CD4-positive, alpha-beta memory T cell (primary cell): ENCODE measurements at regions of chr1 and their contacts with region 1.

Region 1: GRCh38 chr1:159009704-159010361 is at the start of gene IFI16:
- DNase-seq: peak; percentile 70 to 85 (median 77)
- H3K4me3 ChIP-seq: peak within 1 kb of the TSS; percentile 54 to 97
- H3K4me3 Mint-ChIP-seq: peak within 1 kb of the TSS; percentile 89 to 99 (median 97)
- H3K27ac ChIP-seq: peak within 1 kb of the TSS; percentile 88
- H3K27ac Mint-ChIP-seq: peak within 1 kb of the TSS; percentile 87 to 95 (median 93)
- H3K4me1 ChIP-seq: peaks cover 36% of the 10 kb centered on the region
- H3K4me1 Mint-ChIP-seq: peaks cover 40 to 71% (median 46%) of the 10 kb centered on the region in 4 donors
- H3K27me3 ChIP-seq: no peaks in the 10 kb centered on the region
- H3K27me3 Mint-ChIP-seq: no peaks in the 10 kb centered on the region
- total RNA-seq, gene IFI16: 160 to 162 TPM

Region 2: DNA sequence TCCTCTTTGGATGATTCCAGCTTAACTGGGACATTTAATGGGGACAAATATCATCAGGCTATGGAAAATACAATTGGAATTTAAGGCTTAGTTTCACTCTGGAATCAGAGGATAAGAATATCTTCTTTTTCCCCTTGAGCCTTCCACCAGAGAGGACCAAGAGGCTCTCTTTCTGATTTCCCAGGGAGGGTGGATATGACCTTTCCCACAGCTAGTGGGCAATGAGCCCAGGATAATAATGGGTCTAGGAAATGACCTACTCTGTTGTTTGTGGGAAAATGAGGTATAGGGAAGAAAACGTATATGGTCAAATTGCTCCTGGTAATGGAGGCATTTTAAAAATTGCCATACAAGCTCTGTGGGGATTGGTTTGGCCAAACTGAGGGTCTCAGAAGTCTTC is 457.5 kb before region 1 on chr1:
- CTCF ChIA-PET with region 1: no interaction called
- POLR2A ChIA-PET with region 1: no interaction called
- intact Hi-C with region 1: no loop called
- DNase-seq: no peak
- H3K4me3 ChIP-seq: no peak overlapping the region
- H3K4me3 Mint-ChIP-seq: no peak overlapping the region
- H3K27ac ChIP-seq: no peak overlapping the region
- H3K27ac Mint-ChIP-seq: no peak overlapping the region
- H3K4me1 ChIP-seq: no peaks in the 10 kb centered on the region
- H3K4me1 Mint-ChIP-seq: no peaks in the 10 kb centered on the region
- H3K27me3 ChIP-seq: peaks cover 3% of the 10 kb centered on the region
- H3K27me3 Mint-ChIP-seq: peaks cover 10 to 17% of the 10 kb centered on the region in 2 donors

Region 3: DNA sequence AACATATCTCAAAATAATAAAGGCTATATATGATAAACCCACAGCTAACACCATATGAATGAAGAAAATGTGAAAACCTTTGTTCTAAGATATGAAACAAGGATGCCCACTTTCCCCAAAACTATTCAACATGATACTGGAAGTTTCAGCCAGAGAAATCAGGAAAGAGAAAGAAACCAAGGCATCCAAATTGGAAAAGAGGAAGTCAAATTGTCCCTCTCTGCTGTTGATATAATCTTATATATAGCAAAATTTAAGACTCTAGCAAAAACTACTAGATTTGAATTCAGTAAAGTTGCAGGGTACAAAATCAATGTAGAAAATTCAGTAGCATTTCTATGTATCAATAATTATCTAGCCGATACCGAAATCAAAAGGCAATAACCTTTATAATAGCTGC is 409.1 kb before region 1 on chr1:
- CTCF ChIA-PET with region 1: no interaction called
- POLR2A ChIA-PET with region 1: no interaction called
- intact Hi-C with region 1: no loop called
- DNase-seq: no peak
- H3K4me3 ChIP-seq: no peak overlapping the region
- H3K4me3 Mint-ChIP-seq: no peak overlapping the region
- H3K27ac ChIP-seq: no peak overlapping the region
- H3K27ac Mint-ChIP-seq: no peak overlapping the region
- H3K4me1 ChIP-seq: no peaks in the 10 kb centered on the region
- H3K4me1 Mint-ChIP-seq: no peaks in the 10 kb centered on the region
- H3K27me3 ChIP-seq: no peaks in the 10 kb centered on the region
- H3K27me3 Mint-ChIP-seq: peaks cover 1 to 5% of the 10 kb centered on the region in 2 donors

Region 4: GRCh38 chr1:158931055-158931737 is 78.6 kb before region 1 on chr1 and contains the start of gene PYHIN1:
- CTCF ChIA-PET with region 1: no interaction called
- POLR2A ChIA-PET with region 1: interaction called, 29 read pairs
- intact Hi-C with region 1: loop called (anchors 2 kb)
- DNase-seq: peak; percentile 52 to 67 (median 57)
- H3K4me3 ChIP-seq: peak within 1 kb of the TSS; percentile 50 to 67
- H3K4me3 Mint-ChIP-seq: peak within 1 kb of the TSS; percentile 97 to 100 (median 99)
- H3K27ac ChIP-seq: peak within 1 kb of the TSS; percentile 62
- H3K27ac Mint-ChIP-seq: peak within 1 kb of the TSS; percentile 83 to 98 (median 96)
- H3K4me1 ChIP-seq: peaks cover 40% of the 10 kb centered on the region
- H3K4me1 Mint-ChIP-seq: peaks cover 31 to 52% (median 37%) of the 10 kb centered on the region in 4 donors
- H3K27me3 ChIP-seq: no peaks in the 10 kb centered on the region
- H3K27me3 Mint-ChIP-seq: no peaks in the 10 kb centered on the region
- total RNA-seq, gene PYHIN1: 83.6 to 93.8 TPM

Region 5: GRCh38 chr1:159056069-159056698 is 46.4 kb after region 1 on chr1:
- CTCF ChIA-PET with region 1: interaction called, 5 read pairs
- POLR2A ChIA-PET with region 1: interaction called, 4 read pairs
- intact Hi-C with region 1: loop called (anchors 5 kb)
- DNase-seq: no peak
- H3K4me3 ChIP-seq: no peak overlapping the region
- H3K4me3 Mint-ChIP-seq: no peak overlapping the region
- H3K27ac ChIP-seq: no peak overlapping the region
- H3K27ac Mint-ChIP-seq: peak overlapping the region in 6 of 7 donors; percentile 42 to 85 (median 69)
- H3K4me1 ChIP-seq: peaks cover 36% of the 10 kb centered on the region
- H3K4me1 Mint-ChIP-seq: peaks cover 30 to 44% (median 42%) of the 10 kb centered on the region in 4 donors
- H3K27me3 ChIP-seq: no peaks in the 10 kb centered on the region
- H3K27me3 Mint-ChIP-seq: no peaks in the 10 kb centered on the region

Region 6: GRCh38 chr1:160637821-160638539 is 1628.1 kb after region 1 on chr1:
- CTCF ChIA-PET with region 1: no interaction called
- POLR2A ChIA-PET with region 1: no interaction called
- intact Hi-C with region 1: no loop called
- DNase-seq: peak; percentile 82 to 89 (median 85)
- H3K4me3 ChIP-seq: peak overlapping the region; percentile 31 to 39
- H3K4me3 Mint-ChIP-seq: peak overlapping the region; percentile 75 to 87 (median 82)
- H3K27ac ChIP-seq: peak overlapping the region; percentile 68
- H3K27ac Mint-ChIP-seq: peak overlapping the region; percentile 87 to 99 (median 98)
- H3K4me1 ChIP-seq: peaks cover 99% of the 10 kb centered on the region
- H3K4me1 Mint-ChIP-seq: peaks cover 77 to 98% (median 88%) of the 10 kb centered on the region in 4 donors
- H3K27me3 ChIP-seq: no peaks in the 10 kb centered on the region
- H3K27me3 Mint-ChIP-seq: no peaks in the 10 kb centered on the region